Right ventricle myocardium superior (tissue), 1 donor: ENCODE measurements at regions of chr6 and their contacts with region 1.

Region 1: DNA sequence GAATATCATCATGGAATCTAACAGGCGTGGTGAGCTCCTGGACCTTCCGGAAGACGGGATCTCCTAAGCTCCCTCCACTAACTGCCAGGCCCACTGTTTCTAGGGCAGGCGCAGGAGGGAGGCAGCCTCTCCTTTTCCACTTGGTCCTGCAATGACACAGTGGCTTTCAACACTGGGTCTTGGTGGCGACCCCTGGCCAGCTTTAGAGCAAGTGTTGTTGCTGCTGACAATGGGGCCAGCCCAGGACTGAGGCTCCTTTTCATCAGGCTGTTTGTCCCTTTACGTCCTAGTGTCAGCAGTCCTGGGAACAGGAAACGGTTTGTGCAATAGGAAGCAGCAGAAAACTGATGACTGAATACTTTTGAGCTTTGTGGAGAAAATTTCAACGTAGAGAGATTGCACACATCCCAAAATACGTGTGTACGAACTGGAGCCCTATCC is 9.7 kb upstream of the QKI start:
- DNase-seq: peak; percentile 70
- ATAC-seq: peak; percentile 69

Region 2: DNA sequence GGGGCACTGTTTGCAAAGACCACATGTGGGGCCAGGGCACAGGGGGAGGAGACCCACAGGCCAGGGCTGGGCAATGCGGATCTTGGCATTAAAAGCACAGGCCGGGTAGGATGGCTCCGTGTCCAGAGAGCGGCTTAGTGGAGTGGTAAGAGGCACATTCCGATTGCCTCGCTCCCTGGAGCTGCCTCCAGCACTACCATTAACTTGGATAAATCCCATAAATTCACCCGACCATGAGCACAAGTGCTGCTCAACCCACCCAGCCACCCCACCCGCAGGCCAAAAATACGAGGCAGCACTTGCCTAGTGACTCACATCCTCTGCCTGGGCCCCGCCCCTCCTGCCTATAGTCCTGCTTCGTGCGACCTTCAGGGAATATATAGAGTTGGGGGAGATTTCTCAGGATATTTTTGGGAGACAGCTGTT is 57.8 kb before region 1 on chr6:
- intact Hi-C with region 1: loop called (anchors 5 kb)
- DNase-seq: no peak
- ATAC-seq: peak; percentile 20